HepG2 (cell line): ENCODE measurements at regions of chr2 and their contacts with region 1.

Region 1: DNA sequence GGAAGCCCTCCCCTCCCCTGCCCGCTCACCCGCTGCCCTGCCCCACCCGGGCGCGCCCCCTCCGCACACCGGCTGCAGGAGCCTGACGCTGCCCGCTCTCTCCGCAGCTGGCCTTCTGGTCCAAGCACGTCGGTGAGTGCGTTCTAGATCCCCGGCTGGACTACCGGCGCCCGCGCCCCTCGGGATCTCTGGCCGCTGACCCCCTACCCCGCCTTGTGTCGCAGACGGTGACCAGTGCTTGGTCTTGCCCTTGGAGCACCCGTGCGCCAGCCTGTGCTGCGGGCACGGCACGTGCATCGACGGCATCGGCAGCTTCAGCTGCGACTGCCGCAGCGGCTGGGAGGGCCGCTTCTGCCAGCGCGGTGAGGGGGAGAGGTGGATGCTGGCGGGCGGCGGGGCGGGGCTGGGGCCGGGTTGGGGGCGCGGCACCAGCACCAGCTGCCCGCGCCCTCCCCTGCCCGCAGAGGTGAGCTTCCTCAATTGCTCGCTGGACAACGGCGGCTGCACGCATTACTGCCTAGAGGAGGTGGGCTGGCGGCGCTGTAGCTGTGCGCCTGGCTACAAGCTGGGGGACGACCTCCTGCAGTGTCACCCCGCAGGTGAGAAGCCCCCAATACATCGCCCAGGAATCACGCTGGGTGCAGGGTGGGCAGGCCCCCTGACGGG is 4.7 kb downstream of the PROC start:
- DNase-seq: no peak
- ATAC-seq: no peak
- H3K4me3 ChIP-seq: no peak overlapping the region
- H3K27ac ChIP-seq: no peak overlapping the region
- H3K4me1 ChIP-seq: peaks cover 41% of the 10 kb centered on the region
- H3K27me3 ChIP-seq: no peaks in the 10 kb centered on the region
- CTCF ChIP-seq: no peak
- EP300 ChIP-seq: no peak
- POLR2A ChIP-seq: no peak
- RAD21 ChIP-seq: no peak

Region 2: GRCh38 chr2:127239395-127239794 is 183.5 kb before region 1 on chr2:
- CTCF ChIA-PET with region 1: no interaction called
- POLR2A ChIA-PET with region 1: no interaction called
- in situ Hi-C with region 1: no loop called
- intact Hi-C with region 1: no loop called
- DNase-seq: peak; percentile 47
- ATAC-seq: peak; percentile 49
- H3K4me3 ChIP-seq: no peak overlapping the region
- H3K27ac ChIP-seq: no peak overlapping the region
- H3K4me1 ChIP-seq: peaks cover 28% of the 10 kb centered on the region
- H3K27me3 ChIP-seq: 0 out of 5 replicates have a peak, but pooled peaks cover 0 to 3% of the 10 kb centered on the region in 2 experiments
- CTCF ChIP-seq: no peak
- EP300 ChIP-seq: no peak
- POLR2A ChIP-seq: no peak
- RAD21 ChIP-seq: no peak

Region 3: DNA sequence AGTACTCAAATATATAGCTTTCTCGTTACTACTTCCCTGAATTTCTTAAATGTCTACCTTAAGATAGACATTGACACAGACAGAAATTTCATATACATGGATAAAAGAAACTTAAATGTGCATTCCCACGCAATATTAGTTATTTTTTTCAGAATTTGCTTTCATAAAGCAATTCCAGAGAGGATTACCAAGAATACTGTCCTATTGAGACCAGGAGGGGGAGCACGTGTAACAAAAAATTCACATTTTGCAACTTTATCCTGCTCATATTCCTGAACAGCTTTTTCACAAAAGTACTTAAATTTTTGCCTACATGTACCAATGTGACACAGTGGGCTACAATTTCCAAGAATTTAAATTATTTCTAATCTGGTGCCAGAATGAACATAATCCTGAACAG is 98.3 kb before region 1 on chr2:
- CTCF ChIA-PET with region 1: no interaction called
- POLR2A ChIA-PET with region 1: no interaction called
- in situ Hi-C with region 1: no loop called
- intact Hi-C with region 1: no loop called
- DNase-seq: peak; percentile 59
- ATAC-seq: peak; percentile 79
- H3K4me3 ChIP-seq: no peak overlapping the region
- H3K27ac ChIP-seq: no peak overlapping the region
- H3K4me1 ChIP-seq: peaks cover 5% of the 10 kb centered on the region
- H3K27me3 ChIP-seq: no peaks in the 10 kb centered on the region
- CTCF ChIP-seq: peak; percentile 67
- EP300 ChIP-seq: no peak
- POLR2A ChIP-seq: no peak
- RAD21 ChIP-seq: peak; percentile 50; the same call in 1 of the 2 replicates

Region 4: DNA sequence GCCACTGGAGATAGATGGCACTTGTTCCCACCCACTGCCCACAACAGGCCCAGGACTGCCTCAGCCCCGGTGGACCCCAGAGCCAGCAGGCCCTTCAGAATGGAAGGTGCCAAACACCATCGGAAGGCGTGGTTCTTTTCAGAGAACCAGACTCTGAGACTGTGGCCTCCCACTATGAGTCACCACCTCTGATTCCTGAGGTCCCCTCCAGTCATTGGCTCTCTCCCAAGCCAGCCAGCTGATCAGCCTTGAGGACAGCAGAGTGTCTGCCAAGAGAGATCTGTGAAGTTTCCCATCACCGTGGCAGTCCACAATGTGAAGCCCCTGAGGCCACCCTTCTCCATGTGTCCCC is 24.7 kb before region 1 on chr2:
- CTCF ChIA-PET with region 1: no interaction called
- POLR2A ChIA-PET with region 1: interaction called, 11 read pairs
- in situ Hi-C with region 1: no loop called
- intact Hi-C with region 1: no loop called
- DNase-seq: peak; percentile 78
- ATAC-seq: peak; percentile 73
- H3K4me3 ChIP-seq: no peak overlapping the region
- H3K27ac ChIP-seq: no peak overlapping the region
- H3K4me1 ChIP-seq: peaks cover 41% of the 10 kb centered on the region
- H3K27me3 ChIP-seq: no peaks in the 10 kb centered on the region
- CTCF ChIP-seq: no peak
- EP300 ChIP-seq: no peak
- POLR2A ChIP-seq: no peak
- RAD21 ChIP-seq: no peak

Region 5: DNA sequence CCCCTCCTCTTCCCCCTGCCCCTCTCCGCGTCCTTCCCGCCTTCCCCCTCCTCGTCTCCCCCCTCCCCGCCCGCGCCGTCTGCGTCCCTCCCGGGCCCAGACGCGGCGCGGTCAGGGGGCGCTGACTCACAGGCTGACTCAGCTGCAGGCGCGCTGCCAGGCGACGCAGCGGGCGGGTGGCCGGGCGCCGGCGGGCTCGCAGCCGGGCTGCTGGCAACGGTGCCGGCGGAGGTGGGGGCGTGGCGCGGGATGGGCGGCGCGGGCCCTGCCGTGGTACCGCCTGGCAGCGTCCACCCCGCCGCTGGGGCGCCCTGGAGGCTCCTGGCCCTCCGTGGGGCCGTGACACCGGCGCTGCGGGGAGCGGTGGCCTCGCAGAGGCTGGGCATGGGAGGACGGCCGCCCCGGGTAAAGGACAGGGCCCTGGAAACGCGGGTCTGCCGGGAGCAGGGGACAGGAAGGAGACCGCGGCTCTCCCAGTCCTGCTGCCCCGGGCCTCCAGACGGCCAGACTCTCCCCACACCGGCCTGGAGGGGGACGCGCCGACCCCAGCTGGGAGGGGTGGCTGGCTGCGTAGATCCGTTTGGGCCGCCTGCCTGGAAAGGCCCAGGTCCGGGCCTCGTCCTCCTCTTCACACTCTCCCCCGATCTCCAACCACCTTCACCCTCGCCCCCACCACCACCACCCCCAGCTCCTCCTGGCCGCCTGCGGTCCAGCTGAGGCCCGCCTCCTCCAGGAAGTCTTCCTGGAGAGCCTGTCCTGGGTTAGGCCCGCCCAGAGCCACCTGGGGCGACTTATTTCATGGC is 14.7 kb before region 1 on chr2:
- CTCF ChIA-PET with region 1: no interaction called
- POLR2A ChIA-PET with region 1: interaction called, 48 read pairs
- in situ Hi-C with region 1: no loop called
- intact Hi-C with region 1: no loop called
- DNase-seq: peak; percentile 83
- ATAC-seq: peak; percentile 93
- H3K4me3 ChIP-seq: peak overlapping the region; percentile 71 to 89 (median 77)
- H3K27ac ChIP-seq: peak overlapping the region; percentile 82
- H3K4me1 ChIP-seq: peaks cover 63% of the 10 kb centered on the region
- H3K27me3 ChIP-seq: no peaks in the 10 kb centered on the region
- CTCF ChIP-seq: peak; percentile 46; the same call in 1 of the 2 replicates
- EP300 ChIP-seq: peak in 1 of 2 experiments; percentile 78; a peak in 2 of 4 replicates
- POLR2A ChIP-seq: peak; percentile 28 to 49; a peak in 2 of 4 replicates
- RAD21 ChIP-seq: peak; percentile 87